ENCODE measurements at regions of chr2 and their contacts with region 1.

Region 1: GRCh38 chr2:74576863-74577229 is 22.3 kb downstream of the DOK1 start:
- DNase-seq: no peak
- H3K4me3 ChIP-seq: no peak overlapping the region
- H3K4me1 ChIP-seq: no peaks in the 10 kb centered on the region
- H3K27me3 ChIP-seq: no peaks in the 10 kb centered on the region

Region 2: GRCh38 chr2:74488644-74489481 is 88.0 kb before region 1 on chr2:
- in situ Hi-C with region 1: loop called (anchors 5 kb)
- DNase-seq: no peak
- H3K4me3 ChIP-seq: no peak overlapping the region
- H3K4me1 ChIP-seq: no peaks in the 10 kb centered on the region
- H3K27me3 ChIP-seq: no peaks in the 10 kb centered on the region

Measured in HAP-1 (cell line).